Prostate gland (tissue), 2 donors: ENCODE measurements at regions of chr17 and their contacts with region 1.

Region 1: GRCh38 chr17:8288336-8289102 is at the start of gene RANGRF:
- DNase-seq: peak; percentile 86
- H3K4me3 ChIP-seq: peak within 1 kb of the TSS; percentile 58 to 62
- H3K27ac ChIP-seq: peak within 1 kb of the TSS; percentile 89 to 95
- H3K4me1 ChIP-seq: no peaks in the 10 kb centered on the region
- H3K27me3 ChIP-seq: no peaks in the 10 kb centered on the region
- CTCF ChIP-seq: no peak
- POLR2A ChIP-seq: peak; percentile 31
- total RNA-seq, gene RANGRF: 29.5 to 30.1 TPM

Region 2: GRCh38 chr17:8248751-8249607 is 39.5 kb before region 1 on chr17 and contains the start of gene PFAS:
- intact Hi-C with region 1: loop called (anchors 5 kb)
- DNase-seq: peak; percentile 94
- H3K4me3 ChIP-seq: peak within 1 kb of the TSS; percentile 59 to 62
- H3K27ac ChIP-seq: peak within 1 kb of the TSS; percentile 98 to 99
- H3K4me1 ChIP-seq: no peaks in the 10 kb centered on the region
- H3K27me3 ChIP-seq: no peaks in the 10 kb centered on the region
- CTCF ChIP-seq: peak in 2 of 4 experiments; percentile 4 to 13
- POLR2A ChIP-seq: peak; percentile 70
- total RNA-seq, gene PFAS: 17.0 to 29.0 TPM

Region 3: GRCh38 chr17:8326511-8327302 is 38.2 kb after region 1 on chr17:
- intact Hi-C with region 1: no loop called
- DNase-seq: no peak
- H3K4me3 ChIP-seq: peak overlapping the region; percentile 29 to 34
- H3K27ac ChIP-seq: no peak overlapping the region
- H3K4me1 ChIP-seq: no peaks in the 10 kb centered on the region
- H3K27me3 ChIP-seq: no peaks in the 10 kb centered on the region
- CTCF ChIP-seq: no peak
- POLR2A ChIP-seq: no peak

Region 4: DNA sequence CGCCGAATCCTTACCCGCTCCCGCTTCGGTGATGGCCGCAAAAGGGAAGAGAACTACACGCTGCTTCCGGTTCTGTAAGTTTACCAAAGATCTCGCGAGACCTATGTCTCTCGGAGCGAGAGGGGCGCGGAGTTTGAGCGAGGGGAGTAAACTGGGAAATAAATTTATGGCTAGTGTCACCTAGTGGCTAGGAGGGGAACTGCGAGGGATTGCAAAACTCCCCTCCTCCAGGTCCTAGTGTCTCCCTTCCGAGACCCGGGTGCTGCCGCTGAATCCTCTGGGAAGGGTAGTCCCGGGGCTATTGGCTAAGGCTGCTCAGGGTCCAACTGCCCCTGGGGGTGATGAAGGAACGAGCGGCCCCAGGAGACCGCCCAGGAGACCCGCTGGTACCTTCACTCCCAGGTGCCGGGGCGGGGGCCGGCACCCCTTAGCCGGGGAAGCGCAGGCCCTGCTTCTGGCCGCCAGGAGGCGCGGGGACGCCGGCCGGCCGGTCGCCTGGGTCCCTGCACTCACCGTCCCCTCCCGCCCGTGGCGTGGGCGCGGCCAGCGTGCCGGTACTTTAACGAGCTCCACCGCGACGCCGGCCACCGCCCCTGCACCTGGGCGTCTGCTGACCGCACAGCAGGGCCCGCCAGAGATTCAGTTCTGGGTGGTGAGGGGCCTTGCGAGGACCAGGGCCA is 94.8 kb after region 1 on chr17 and contains the start of gene RPL26:
- intact Hi-C with region 1: no loop called
- DNase-seq: peak; percentile 97
- H3K4me3 ChIP-seq: peak within 1 kb of the TSS; percentile 50 to 61
- H3K27ac ChIP-seq: peak within 1 kb of the TSS; percentile 81 to 85
- H3K4me1 ChIP-seq: peaks cover 21% of the 10 kb centered on the region
- H3K27me3 ChIP-seq: no peaks in the 10 kb centered on the region
- CTCF ChIP-seq: peak; percentile 98 to 100 (median 100)
- POLR2A ChIP-seq: peak; percentile 48
- total RNA-seq, gene RPL26: 1,762 to 3,819 TPM